ENCODE measurements at regions of chr14 and their contacts with region 1.

Region 1: DNA sequence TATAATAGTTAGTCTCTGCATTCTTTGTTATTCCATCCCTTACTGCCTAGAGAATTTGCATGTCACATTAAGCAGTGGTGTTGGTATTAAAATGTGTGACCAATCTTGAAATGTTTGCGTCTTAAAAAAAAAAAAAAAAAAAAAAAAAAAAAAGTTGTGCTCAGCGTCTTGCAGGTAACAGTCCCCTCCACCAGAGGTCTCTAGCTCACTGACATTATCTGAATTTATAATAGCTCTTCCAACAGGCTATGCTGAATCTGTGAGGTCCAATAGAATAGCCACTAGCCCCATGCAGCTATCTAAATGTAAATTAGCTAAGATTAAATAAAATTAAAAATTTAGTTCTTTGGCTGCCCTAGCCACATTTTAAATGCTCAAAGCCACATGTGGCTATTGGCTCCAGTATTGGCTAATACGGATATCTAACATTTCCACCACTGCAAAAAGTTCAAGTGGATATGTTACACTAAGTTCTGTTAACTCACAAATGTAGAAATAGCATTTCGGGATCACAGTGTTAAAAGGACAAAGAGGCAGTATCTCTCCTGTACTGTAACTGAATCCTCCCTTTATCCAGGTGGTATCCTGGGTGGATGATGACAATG is 28.7 kb downstream of the NKX2-8 start:
- DNase-seq: no peak
- ATAC-seq: peak; percentile 79
- H3K4me3 Mint-ChIP-seq: no peak overlapping the region
- H3K27ac Mint-ChIP-seq: no peak overlapping the region
- H3K4me1 Mint-ChIP-seq: peaks cover 14% of the 10 kb centered on the region
- H3K27me3 Mint-ChIP-seq: peaks cover 3% of the 10 kb centered on the region; the same call in 1 of the 2 replicates
- CTCF ChIP-seq: peak; percentile 27; the same call in 1 of the 2 replicates

Region 2: DNA sequence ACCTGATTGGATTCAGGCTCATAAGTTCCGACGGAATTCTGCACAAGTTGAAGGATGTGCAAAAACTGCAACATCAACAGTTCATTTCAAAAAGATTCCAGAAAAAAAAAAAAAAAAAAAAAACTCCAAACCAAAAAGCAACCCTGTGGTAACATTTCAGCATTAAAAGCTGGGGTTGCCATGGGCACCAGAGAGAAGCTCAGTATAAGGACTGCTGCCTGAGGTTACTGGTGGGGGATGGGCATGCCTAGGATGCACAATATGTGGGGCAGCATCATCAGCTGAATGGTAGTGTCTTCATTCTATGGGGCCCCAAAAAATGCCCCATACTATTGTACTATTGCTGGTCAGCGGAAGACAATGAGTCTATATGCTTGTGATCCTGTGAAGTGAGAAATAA is 278.0 kb before region 1 on chr14:
- CTCF ChIA-PET with region 1: interaction called, 10 read pairs
- POLR2A ChIA-PET with region 1: no interaction called
- DNase-seq: no peak
- ATAC-seq: peak; percentile 32; the same call in 1 of the 2 replicates
- H3K4me3 Mint-ChIP-seq: no peak overlapping the region
- H3K27ac Mint-ChIP-seq: no peak overlapping the region
- H3K4me1 Mint-ChIP-seq: peaks cover 76% of the 10 kb centered on the region
- H3K27me3 Mint-ChIP-seq: peaks cover 38% of the 10 kb centered on the region
- CTCF ChIP-seq: no peak

Region 3: DNA sequence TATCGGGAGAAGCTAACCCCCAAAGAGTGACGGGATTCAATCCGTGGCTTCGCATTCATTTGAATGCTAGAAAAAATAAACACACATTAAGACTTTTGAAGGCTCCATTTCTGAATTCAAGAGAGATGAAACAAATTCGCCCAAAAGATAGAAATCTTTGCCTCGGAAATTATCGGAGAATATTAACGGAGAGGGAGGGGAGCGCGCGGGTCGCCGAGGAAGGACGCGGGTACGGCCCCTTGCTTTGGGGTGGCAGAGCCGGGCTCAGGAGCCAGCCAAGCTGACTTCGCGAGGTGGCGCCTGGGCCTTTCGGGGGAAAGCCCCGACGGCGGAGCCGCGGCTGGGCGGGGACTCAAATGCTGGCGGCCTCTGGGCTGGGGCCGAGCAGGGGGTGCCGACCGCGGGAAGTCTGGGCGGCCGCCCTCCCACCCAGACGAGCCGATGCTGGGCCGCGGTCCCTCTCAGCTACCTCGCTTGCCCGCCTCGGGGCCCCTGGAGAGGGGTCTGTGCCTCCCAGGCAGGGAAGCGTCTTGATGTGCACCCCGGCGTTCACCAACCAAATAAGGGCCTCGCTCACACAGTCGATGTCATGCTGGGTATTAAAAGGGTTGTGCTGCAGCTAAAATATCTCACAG is 48.5 kb before region 1 on chr14:
- CTCF ChIA-PET with region 1: interaction called, 15 read pairs
- POLR2A ChIA-PET with region 1: no interaction called
- DNase-seq: peak; percentile 60
- ATAC-seq: peak; percentile 30
- H3K4me3 Mint-ChIP-seq: peak overlapping the region; percentile 65
- H3K27ac Mint-ChIP-seq: no peak overlapping the region
- H3K4me1 Mint-ChIP-seq: peaks cover 56% of the 10 kb centered on the region
- H3K27me3 Mint-ChIP-seq: peaks cover 100% of the 10 kb centered on the region
- CTCF ChIP-seq: no peak

Region 4: GRCh38 chr14:36580856-36581831 is 27.4 kb after region 1 on chr14:
- CTCF ChIA-PET with region 1: interaction called, 25 read pairs
- POLR2A ChIA-PET with region 1: no interaction called
- DNase-seq: peak; percentile 61
- ATAC-seq: peak; percentile 52
- H3K4me3 Mint-ChIP-seq: peak overlapping the region; percentile 60
- H3K27ac Mint-ChIP-seq: no peak overlapping the region
- H3K4me1 Mint-ChIP-seq: peaks cover 29% of the 10 kb centered on the region
- H3K27me3 Mint-ChIP-seq: no peaks in the 10 kb centered on the region; the same call in 1 of the 2 replicates
- CTCF ChIP-seq: no peak

Region 5: GRCh38 chr14:36647824-36648753 is 94.3 kb after region 1 on chr14:
- CTCF ChIA-PET with region 1: interaction called, 16 read pairs
- POLR2A ChIA-PET with region 1: no interaction called
- DNase-seq: peak; percentile 70
- ATAC-seq: peak; percentile 83
- H3K4me3 Mint-ChIP-seq: peak overlapping the region; percentile 69
- H3K27ac Mint-ChIP-seq: no peak overlapping the region
- H3K4me1 Mint-ChIP-seq: peaks cover 8% of the 10 kb centered on the region
- H3K27me3 Mint-ChIP-seq: peaks cover 100% of the 10 kb centered on the region
- CTCF ChIP-seq: no peak; the same call in 1 of the 2 replicates

Measured in WTC11 (cell line).